ENCODE measurements at regions of chr1 and their contacts with region 1.

Region 1: DNA sequence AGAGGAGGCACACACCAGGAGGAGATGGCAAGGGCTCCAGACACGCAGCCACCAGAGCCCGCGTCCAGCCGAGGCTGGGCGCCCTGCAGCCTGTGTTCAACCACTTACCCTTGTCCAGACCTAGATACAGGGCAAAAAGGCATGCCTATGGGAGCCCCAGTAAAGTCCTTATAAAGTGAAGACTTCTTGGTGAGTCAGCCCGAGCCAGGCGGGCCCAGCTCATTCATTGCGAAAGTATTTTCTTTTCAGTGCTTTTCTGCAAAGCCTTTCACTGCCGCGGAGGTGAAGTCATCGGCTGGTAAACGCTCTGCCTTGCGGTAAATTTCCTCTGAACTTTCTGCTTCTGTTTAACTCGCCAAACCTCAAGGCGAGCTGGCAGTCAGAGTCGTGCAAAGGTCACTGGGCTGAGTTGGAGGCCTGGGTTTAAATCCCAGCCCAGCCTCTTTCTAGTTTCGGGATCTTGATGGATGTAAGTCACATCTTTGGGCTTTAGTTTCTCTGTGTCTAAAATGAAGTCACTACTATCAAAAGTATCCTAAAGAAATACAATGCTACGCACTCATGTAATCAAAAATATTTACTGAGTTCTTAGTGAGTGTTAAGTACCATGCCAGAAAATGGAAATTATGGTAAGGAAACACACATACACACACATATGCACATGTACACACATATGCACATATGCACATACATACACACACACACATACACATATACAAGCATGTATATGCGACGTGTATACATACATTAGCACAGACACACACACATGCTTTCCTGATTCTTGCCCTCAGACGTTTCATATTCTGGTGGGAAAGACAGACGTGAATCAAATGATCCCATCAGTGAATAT is 54.7 kb upstream of the IFFO2 start:
- DNase-seq: peak; percentile 96
- H3K4me3 Mint-ChIP-seq: no peak overlapping the region
- H3K27ac Mint-ChIP-seq: peak overlapping the region; percentile 85
- H3K4me1 Mint-ChIP-seq: peaks cover 23% of the 10 kb centered on the region
- H3K27me3 Mint-ChIP-seq: no peaks in the 10 kb centered on the region
- CTCF ChIP-seq: no peak

Region 2: GRCh38 chr1:18956369-18957135 is 54.7 kb before region 1 on chr1 and contains the start of gene IFFO2:
- CTCF ChIA-PET with region 1: no interaction called
- POLR2A ChIA-PET with region 1: interaction called, 15 read pairs
- intact Hi-C with region 1: no loop called
- DNase-seq: peak; percentile 91
- H3K4me3 Mint-ChIP-seq: peak within 1 kb of the TSS; percentile 74
- H3K27ac Mint-ChIP-seq: no peak within 1 kb of the TSS
- H3K4me1 Mint-ChIP-seq: peaks cover 19% of the 10 kb centered on the region
- H3K27me3 Mint-ChIP-seq: peaks cover 10% of the 10 kb centered on the region
- CTCF ChIP-seq: no peak
- total RNA-seq, gene IFFO2: 10.8 and 21.0 TPM in 2 replicates

Region 3: DNA sequence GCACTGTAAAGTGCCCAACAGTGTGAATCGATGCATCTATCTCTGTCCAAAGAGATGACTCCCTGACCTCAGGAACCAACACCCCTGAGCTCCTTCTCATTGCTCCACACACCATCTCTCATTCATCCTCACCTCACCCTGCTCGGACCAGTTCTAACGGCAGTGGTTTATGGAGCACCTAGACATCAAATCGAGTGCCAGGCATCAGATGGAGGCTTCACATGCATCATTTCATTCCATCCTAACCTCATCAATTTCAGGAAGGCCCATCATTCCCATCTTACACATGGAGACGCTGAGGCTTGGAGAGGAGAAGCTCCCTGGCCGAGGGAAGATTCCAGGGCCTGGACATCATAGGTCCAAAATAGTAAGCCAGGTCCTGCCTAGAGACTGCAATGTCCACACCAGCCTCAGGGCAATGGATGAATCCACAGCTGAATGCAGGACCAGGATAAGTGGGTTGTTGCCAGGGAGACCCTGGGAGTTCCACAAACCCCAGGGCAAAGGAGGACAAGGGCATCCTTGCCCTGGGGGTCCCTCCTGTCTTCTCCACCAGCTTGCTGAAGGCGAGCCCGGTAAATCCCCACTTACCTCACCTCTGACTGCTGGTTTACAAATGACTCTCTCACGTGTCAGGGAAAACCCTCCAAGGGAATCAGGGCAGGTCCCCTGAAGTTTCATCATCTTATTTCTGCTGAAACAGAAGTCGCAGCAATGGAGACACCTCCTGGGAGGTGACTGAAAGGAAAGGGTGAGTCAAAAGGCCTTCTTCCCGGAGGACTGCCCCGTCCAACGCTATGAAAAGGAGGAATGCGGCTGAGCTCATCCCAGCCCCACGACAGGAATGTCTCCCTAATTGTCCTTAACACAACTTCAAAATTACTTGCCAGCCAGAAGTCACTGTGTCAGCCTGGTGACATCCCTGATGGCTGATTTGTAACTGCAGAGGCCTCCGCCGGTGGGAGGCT is 45.7 kb before region 1 on chr1:
- CTCF ChIA-PET with region 1: no interaction called
- POLR2A ChIA-PET with region 1: interaction called, 14 read pairs
- intact Hi-C with region 1: no loop called
- DNase-seq: peak; percentile 73
- H3K4me3 Mint-ChIP-seq: no peak overlapping the region
- H3K27ac Mint-ChIP-seq: no peak overlapping the region
- H3K4me1 Mint-ChIP-seq: peaks cover 32% of the 10 kb centered on the region
- H3K27me3 Mint-ChIP-seq: peaks cover 4% of the 10 kb centered on the region
- CTCF ChIP-seq: no peak

Region 4: DNA sequence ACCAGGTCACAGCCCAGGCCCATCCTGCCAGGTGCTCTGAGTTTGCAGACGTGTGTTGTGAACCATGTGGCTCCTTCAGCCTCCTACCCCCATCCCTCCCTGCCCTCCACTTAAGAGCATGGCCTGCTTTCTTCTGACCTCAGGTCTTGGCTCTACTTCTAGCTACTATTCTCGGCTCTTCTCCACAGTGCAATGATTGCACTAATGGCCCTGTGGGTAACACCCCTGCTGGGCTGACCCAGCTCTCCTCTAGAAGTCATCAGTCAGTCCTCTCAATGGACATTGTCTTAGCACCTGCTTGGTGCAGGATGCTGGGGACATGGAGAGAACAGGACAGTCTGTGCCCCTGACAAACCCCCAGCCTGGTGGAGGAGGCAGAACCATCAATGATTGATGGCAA is 32.5 kb before region 1 on chr1:
- CTCF ChIA-PET with region 1: no interaction called
- POLR2A ChIA-PET with region 1: interaction called, 3 read pairs
- intact Hi-C with region 1: loop called (anchors 5 kb)
- DNase-seq: no peak
- H3K4me3 Mint-ChIP-seq: no peak overlapping the region
- H3K27ac Mint-ChIP-seq: no peak overlapping the region
- H3K4me1 Mint-ChIP-seq: no peaks in the 10 kb centered on the region
- H3K27me3 Mint-ChIP-seq: peaks cover 21% of the 10 kb centered on the region
- CTCF ChIP-seq: no peak

Region 5: GRCh38 chr1:18999359-18999758 is 11.9 kb before region 1 on chr1:
- CTCF ChIA-PET with region 1: no interaction called
- POLR2A ChIA-PET with region 1: interaction called, 22 read pairs
- intact Hi-C with region 1: no loop called
- DNase-seq: no peak
- H3K4me3 Mint-ChIP-seq: no peak overlapping the region
- H3K27ac Mint-ChIP-seq: no peak overlapping the region
- H3K4me1 Mint-ChIP-seq: peaks cover 11% of the 10 kb centered on the region
- H3K27me3 Mint-ChIP-seq: no peaks in the 10 kb centered on the region
- CTCF ChIP-seq: no peak

Region 6: DNA sequence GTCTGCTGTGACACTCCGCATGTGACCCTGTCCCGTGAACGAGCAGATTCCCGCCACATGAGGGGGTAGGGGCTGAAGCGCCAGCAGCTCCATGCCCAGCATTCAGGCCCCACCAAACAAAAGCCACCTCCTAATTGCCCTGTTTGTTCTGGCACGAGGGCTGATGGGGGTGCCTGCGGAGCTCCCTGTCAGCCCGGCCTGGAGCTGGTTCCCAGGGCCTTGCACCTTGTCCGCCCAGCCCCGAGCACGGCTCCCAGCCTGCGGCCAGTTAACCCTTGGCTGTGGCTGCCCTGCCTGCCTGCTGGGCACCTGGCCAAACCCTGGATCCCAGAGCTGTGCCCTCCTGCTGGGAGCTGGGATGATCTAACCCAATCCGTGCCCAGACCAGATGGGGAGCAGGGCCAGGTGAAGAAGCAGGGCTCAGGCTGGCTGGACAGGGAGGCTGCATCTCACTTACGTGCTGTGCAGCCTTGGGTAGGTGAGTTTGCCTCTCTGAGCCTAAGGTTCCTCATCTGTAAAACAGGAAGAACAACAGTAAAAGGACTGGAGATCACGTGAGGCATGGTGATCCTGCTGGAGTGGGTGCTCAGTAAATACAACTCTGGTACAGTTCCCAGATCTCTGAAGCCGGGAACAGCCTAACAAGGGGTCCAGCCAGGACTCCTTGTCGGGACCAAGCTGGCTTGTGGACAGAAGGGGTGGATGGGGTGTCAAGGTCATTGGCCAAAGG is 56.1 kb after region 1 on chr1:
- CTCF ChIA-PET with region 1: interaction called, 4 read pairs
- POLR2A ChIA-PET with region 1: interaction called, 28 read pairs
- intact Hi-C with region 1: loop called (anchors 5 kb)
- DNase-seq: peak; percentile 94
- H3K4me3 Mint-ChIP-seq: no peak overlapping the region
- H3K27ac Mint-ChIP-seq: no peak overlapping the region
- H3K4me1 Mint-ChIP-seq: peaks cover 12% of the 10 kb centered on the region
- H3K27me3 Mint-ChIP-seq: no peaks in the 10 kb centered on the region
- CTCF ChIP-seq: no peak

Measured in MCF 10A (cell line).